MCF 10A (cell line): ENCODE measurements at regions of chrX and their contacts with region 1.

Region 1: DNA sequence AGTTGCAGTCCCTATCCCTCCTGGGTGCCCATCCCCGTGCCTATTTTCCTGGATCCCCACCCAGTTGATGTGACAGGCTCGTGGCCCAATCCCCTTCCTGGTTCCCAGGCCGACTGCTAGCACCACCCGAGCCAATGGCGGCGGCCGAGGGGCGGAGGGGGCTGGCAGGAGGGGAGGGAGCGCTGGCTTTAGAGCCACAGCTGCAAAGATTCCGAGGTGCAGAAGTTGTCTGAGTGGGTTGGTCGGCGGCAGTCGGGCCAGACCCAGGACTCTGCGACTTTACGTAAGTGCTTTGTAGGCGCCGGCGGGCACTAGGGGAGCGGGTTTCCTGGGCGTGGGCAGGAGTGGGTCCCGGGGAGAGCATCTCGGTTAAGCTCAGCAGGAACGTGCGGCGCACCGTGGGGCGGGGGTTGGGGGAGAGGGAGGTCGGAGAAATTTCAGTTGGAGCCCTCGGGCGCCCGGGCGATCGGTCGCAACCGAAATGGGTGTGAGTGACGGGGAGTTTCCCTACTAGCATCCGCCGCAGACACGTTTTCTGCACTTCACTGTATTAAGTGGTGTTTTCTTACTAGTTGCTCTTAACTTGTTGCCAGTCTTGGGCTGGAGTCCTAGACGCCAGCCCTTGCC is at the start of gene PLS3:
- DNase-seq: peak; percentile 81
- H3K4me3 Mint-ChIP-seq: peak within 1 kb of the TSS; percentile 84
- H3K27ac Mint-ChIP-seq: peak within 1 kb of the TSS; percentile 93
- H3K4me1 Mint-ChIP-seq: no peaks in the 10 kb centered on the region
- H3K27me3 Mint-ChIP-seq: peaks cover 36% of the 10 kb centered on the region
- CTCF ChIP-seq: no peak
- total RNA-seq, gene PLS3: 127 and 147 TPM in 2 replicates

Region 2: DNA sequence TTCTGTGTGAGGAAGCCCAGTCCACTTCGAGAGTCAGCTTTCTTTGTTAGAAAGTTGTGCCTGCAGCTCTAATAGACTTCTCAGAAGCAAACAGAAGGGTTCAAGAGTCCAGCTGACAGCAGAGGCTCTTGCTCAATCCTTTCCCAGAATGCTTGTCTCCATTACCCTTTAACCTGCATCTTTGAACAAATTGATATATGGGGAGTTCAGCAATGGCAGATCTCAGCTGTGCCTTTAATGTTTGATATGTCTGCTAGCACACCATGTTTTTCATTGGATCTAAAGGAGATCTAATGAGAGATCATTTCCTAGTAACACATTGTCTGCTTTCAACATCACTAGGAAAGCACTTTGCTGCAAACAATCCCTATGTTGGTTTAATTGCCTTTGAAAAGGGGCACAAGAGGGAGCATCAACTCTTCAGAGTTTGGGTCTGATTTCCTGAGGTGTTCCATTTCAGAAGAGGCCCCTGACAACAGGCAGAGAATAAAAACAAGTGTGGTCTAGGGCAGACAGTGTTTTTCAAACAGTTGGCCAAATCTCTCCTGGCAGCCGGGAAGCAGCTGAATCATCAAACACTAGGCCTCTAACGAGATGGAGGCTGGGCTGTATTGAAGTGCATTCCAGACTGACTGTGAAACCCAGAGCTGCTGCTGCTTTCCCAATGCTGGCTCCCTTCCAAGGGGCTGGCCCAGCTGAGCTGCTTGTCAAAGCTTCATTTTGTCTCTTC is 216.0 kb before region 1 on chrX:
- CTCF ChIA-PET with region 1: interaction called, 6 read pairs
- POLR2A ChIA-PET with region 1: interaction called, 11 read pairs
- intact Hi-C with region 1: loop called (anchors 1 kb)
- DNase-seq: peak; percentile 93
- H3K4me3 Mint-ChIP-seq: no peak overlapping the region
- H3K27ac Mint-ChIP-seq: peak overlapping the region; percentile 69
- H3K4me1 Mint-ChIP-seq: no peaks in the 10 kb centered on the region
- H3K27me3 Mint-ChIP-seq: peaks cover 41% of the 10 kb centered on the region
- CTCF ChIP-seq: no peak

Region 3: GRCh38 chrX:115592997-115593734 is 32.1 kb after region 1 on chrX:
- CTCF ChIA-PET with region 1: interaction called, 3 read pairs
- POLR2A ChIA-PET with region 1: interaction called, 160 read pairs
- intact Hi-C with region 1: loop called (anchors 1 kb)
- DNase-seq: peak; percentile 56
- H3K4me3 Mint-ChIP-seq: peak overlapping the region; percentile 72
- H3K27ac Mint-ChIP-seq: peak overlapping the region; percentile 87
- H3K4me1 Mint-ChIP-seq: peaks cover 12% of the 10 kb centered on the region
- H3K27me3 Mint-ChIP-seq: peaks cover 92% of the 10 kb centered on the region
- CTCF ChIP-seq: no peak

Region 4: GRCh38 chrX:115616943-115617563 is 56.0 kb after region 1 on chrX:
- CTCF ChIA-PET with region 1: no interaction called
- POLR2A ChIA-PET with region 1: interaction called, 56 read pairs
- intact Hi-C with region 1: no loop called
- DNase-seq: peak; percentile 80
- H3K4me3 Mint-ChIP-seq: peak overlapping the region; percentile 25
- H3K27ac Mint-ChIP-seq: peak overlapping the region; percentile 71
- H3K4me1 Mint-ChIP-seq: peaks cover 16% of the 10 kb centered on the region
- H3K27me3 Mint-ChIP-seq: peaks cover 66% of the 10 kb centered on the region
- CTCF ChIP-seq: no peak